Posterior vena cava (tissue), 2 donors: ENCODE measurements at regions of chr1 and their contacts with region 1.

Region 1: DNA sequence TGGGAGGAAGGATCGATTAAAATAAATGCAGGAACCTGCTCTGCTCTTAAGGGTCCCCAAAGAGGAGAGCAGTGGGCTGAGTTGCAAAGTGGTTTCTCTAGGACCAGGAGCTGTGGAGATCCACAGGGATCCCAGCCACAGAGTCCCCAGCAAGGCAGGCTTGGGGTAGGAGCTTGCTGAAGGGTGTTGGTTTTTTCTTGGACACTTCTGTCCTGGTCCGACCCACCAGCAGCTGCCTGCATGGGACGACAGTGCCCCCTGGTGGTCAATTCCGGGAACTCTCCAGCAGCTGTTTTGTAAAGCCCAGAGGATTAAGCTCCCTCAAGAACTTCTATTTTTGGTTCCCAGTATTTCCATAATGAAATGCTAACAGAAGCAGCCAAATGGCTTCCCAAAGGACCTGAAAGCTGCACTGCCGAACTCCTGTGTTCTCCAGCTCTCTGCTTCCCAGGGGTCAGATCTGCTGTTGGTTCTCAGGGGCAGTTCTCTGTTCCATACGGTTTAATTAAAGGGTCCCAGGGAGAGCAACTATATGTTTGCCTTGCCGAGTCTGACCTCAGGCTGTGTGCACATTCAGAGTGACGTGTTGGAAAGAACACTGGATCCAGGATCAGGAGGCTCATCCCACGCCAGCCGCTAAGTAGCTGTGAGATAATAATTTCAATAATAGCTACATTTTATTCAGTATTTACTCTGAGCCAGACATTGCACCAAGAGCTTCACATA is 23.2 kb downstream of the NENF start:
- DNase-seq: peak; percentile 96

Region 2: GRCh38 chr1:212070720-212071302 is 385.2 kb before region 1 on chr1:
- intact Hi-C with region 1: loop called (anchors 5 kb)
- DNase-seq: no peak

Region 3: GRCh38 chr1:212077051-212077450 is 378.9 kb before region 1 on chr1:
- intact Hi-C with region 1: loop called (anchors 5 kb)
- DNase-seq: no peak

Region 4: GRCh38 chr1:213507472-213508223 is 1051.7 kb after region 1 on chr1:
- intact Hi-C with region 1: no loop called
- DNase-seq: no peak